Prostate gland (tissue), 2 donors: ENCODE measurements at regions of chr5 and their contacts with region 1.

Region 1: DNA sequence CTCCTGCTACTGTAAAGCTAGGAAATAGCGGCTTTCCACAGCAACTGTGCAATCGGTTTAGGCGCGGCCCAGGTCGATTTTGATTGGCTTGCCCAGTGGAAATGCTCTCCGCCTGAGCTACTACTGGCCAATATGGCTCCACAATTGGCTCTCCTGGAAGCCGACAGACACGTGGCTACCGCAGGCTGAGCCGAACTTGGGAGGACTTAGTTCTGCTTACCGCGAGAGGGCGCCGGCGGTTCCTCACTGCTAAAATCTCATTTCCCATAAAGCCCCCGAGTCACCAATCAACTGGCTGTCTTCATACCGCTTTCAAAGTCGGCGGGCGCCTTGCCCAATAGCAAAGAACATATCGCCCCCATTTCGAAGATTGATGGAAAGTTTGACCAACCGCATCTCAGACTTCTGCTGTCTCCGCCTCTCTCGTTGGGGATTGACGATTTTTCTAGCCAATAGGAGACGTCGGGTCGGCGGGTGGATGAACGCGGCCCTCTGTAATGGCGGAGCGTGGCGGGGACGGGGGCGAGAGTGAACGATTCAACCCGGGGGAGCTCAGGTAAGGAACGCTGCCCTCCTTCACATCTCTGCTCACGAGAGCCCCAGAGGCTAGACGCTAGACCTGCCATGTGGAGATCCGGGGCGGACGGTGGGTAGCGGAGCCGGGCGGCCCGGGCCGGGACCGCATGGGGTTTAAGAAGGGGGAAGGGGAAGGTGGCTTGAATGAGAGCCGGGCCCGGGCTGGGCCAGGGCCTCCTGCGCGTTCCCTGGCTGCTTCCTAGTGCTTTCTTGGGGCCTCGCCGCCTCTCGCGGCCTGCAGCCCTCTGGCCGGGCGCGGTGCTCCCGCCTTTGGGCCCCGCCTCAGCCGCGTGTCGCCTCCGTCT is at the start of gene TCERG1:
- DNase-seq: peak; percentile 100
- H3K4me3 ChIP-seq: peak within 1 kb of the TSS; percentile 93 to 97
- H3K27ac ChIP-seq: peak within 1 kb of the TSS; percentile 78 to 87
- H3K4me1 ChIP-seq: no peaks in the 10 kb centered on the region
- H3K27me3 ChIP-seq: no peaks in the 10 kb centered on the region
- CTCF ChIP-seq: peak; percentile 76 to 94 (median 90)
- POLR2A ChIP-seq: peak; percentile 28
- total RNA-seq, gene TCERG1: 41.4 to 83.0 TPM

Region 2: DNA sequence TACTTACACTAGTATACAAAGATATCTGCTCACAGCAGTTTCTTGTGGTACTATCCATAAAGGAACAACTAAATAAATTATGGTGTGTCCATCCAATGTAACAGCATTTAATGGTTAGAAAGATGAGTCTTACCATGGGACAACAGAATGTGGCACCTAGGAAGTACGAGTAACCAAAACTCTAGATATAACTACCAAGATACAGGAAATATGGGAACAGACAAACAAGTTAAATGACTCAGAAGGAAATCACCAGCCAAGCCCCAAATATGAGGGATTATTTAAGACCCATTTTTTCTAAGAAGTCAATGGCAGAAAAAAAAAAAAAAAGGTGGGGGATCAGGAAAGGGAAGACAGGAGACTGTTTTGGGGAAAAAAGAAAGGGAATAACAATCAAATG is 906.7 kb before region 1 on chr5:
- intact Hi-C with region 1: no loop called
- DNase-seq: no peak
- H3K4me3 ChIP-seq: no peak overlapping the region
- H3K27ac ChIP-seq: no peak overlapping the region
- H3K4me1 ChIP-seq: no peaks in the 10 kb centered on the region
- H3K27me3 ChIP-seq: no peaks in the 10 kb centered on the region
- CTCF ChIP-seq: no peak
- POLR2A ChIP-seq: no peak

Region 3: DNA sequence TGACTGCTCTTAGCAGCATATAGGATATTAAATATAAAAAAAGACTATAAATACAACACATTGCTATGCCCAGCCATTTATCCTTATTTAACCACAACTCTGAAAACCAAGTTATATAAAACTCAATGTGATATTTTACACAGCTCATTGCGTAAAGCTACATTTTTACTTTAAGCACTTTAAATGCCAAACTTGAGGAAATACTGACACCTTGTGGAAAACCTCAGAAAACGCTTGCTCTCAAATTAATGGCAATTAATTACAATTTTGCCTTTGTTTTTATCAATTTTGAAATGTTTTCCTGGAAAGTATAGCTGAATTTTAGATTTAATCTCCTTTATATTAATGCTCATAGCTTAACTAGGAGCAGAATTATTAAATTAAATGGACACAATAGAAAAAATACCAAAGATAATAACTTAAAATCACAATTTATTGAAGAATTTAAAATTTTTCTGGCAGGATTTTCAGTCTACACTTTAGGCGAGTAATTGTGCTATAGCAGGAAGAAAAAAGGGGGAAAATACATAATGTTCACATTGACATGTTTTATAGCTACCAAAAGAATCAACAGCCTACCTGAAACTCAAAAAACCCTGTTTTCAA is 316.6 kb before region 1 on chr5:
- intact Hi-C with region 1: no loop called
- DNase-seq: no peak
- H3K4me3 ChIP-seq: no peak overlapping the region
- H3K27ac ChIP-seq: no peak overlapping the region
- H3K4me1 ChIP-seq: no peaks in the 10 kb centered on the region
- H3K27me3 ChIP-seq: no peaks in the 10 kb centered on the region
- CTCF ChIP-seq: peak in 3 of 4 experiments; percentile 33 to 58 (median 57)
- POLR2A ChIP-seq: no peak

Region 4: GRCh38 chr5:146151970-146152369 is 295.1 kb before region 1 on chr5:
- intact Hi-C with region 1: no loop called
- DNase-seq: no peak
- H3K4me3 ChIP-seq: no peak overlapping the region
- H3K27ac ChIP-seq: no peak overlapping the region
- H3K4me1 ChIP-seq: no peaks in the 10 kb centered on the region
- H3K27me3 ChIP-seq: no peaks in the 10 kb centered on the region
- CTCF ChIP-seq: no peak
- POLR2A ChIP-seq: no peak

Region 5: GRCh38 chr5:146179696-146180095 is 267.4 kb before region 1 on chr5:
- intact Hi-C with region 1: loop called (anchors 5 kb)
- DNase-seq: no peak
- H3K4me3 ChIP-seq: no peak overlapping the region
- H3K27ac ChIP-seq: no peak overlapping the region
- H3K4me1 ChIP-seq: no peaks in the 10 kb centered on the region
- H3K27me3 ChIP-seq: no peaks in the 10 kb centered on the region
- CTCF ChIP-seq: no peak
- POLR2A ChIP-seq: no peak